ENCODE measurements at regions of chr22 and their contacts with region 1.

Region 1: DNA sequence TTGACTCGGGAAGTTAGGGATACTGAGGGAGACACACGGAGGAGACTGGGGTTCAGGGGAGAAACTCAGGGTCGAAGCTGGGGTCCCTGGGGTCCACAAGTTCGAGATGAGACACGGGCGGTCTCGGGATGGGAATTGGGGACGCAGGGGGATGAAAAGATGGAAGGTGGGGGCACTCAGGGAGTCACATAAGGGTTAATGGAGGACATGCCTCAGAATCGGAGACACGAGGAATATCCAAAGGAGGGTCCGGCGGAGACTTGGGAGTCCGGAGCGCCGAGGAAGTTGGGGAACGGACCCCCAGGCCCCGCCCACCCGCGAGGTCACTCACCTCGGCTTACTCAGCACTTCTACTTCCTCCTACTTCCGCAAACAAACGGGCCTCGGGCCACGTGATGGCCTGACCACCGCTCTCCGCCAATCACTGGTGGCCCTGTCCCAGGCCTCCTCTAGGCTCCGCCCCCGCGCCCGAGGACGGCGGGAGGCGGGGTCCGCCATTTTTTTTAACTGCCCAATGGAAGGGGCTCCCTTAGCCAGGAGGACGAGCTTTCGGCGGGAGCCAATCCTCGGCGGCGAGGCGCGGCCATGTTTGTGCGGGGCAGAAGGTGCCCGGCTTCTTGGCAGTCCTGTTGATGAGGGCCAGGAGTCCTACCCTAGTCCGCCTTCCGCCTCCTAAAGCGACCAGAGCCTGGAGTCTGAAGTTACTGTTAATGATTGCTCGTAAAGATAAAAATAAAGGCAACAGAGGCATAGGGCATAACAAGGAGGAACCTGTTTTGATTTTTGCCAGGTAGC is at the start of gene PLA2G6:
- DNase-seq: peak; percentile 99
- H3K4me3 ChIP-seq: peak within 1 kb of the TSS; percentile 16 to 60 (median 40)
- H3K27ac ChIP-seq: peak within 1 kb of the TSS; percentile 87 to 95 (median 94)
- H3K4me1 ChIP-seq: peaks cover 16 to 46% of the 10 kb centered on the region in 2 donors
- H3K27me3 ChIP-seq: no peaks in the 10 kb centered on the region
- CTCF ChIP-seq: no peak
- POLR2A ChIP-seq: peak in 1 of 2 donors; percentile 60
- total RNA-seq, gene PLA2G6: 106 to 122 (median 112) TPM

Region 2: DNA sequence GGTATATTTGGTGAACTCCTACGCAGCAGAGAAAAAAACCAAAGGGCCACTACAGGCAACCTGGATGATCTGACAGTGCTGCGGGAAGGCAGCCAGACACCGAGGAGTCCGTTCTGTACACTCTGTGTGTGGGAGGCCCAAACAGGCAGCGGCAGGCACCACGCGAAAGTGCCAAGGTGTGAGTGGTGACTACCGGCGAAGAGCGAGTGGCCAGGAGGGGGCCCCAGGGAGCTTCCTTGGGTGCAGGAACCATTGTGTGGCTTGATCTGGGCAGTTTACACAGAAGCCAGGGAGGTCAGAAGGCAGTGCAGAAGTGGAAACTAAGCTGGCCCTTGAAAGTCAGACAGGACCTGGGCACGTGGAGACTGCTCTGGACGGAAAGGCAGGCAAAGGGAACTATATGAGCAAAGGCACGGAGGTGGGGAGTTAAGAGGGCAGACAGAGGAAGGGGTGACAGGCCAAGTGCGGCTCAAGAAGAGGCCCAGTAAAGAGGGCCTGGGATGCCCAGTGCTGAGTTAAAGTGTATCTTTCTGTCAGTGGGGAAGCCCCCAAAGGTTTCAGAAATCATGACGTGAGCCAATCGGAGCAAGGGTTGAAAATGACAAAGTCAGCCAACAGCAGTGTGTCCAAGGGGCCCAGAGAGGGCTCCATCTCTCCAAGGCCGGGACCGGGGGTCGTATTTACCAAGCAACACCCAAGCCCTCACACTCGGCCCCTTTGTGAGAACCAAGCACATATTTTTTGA is 80.6 kb after region 1 on chr22:
- intact Hi-C with region 1: loop called (anchors 10 kb)
- DNase-seq: peak; percentile 80 to 86
- H3K4me3 ChIP-seq: no peak overlapping the region
- H3K27ac ChIP-seq: peak overlapping the region; percentile 53 to 73 (median 63)
- H3K4me1 ChIP-seq: peaks cover 47 to 83% of the 10 kb centered on the region in 2 donors
- H3K27me3 ChIP-seq: no peaks in the 10 kb centered on the region
- CTCF ChIP-seq: peak in 5 of 6 experiments; percentile 26 to 76 (median 71)
- POLR2A ChIP-seq: no peak

Measured in thyroid gland (tissue), 4 donors.